ENCODE measurements at regions of chr12 and their contacts with region 1.

Region 1: DNA sequence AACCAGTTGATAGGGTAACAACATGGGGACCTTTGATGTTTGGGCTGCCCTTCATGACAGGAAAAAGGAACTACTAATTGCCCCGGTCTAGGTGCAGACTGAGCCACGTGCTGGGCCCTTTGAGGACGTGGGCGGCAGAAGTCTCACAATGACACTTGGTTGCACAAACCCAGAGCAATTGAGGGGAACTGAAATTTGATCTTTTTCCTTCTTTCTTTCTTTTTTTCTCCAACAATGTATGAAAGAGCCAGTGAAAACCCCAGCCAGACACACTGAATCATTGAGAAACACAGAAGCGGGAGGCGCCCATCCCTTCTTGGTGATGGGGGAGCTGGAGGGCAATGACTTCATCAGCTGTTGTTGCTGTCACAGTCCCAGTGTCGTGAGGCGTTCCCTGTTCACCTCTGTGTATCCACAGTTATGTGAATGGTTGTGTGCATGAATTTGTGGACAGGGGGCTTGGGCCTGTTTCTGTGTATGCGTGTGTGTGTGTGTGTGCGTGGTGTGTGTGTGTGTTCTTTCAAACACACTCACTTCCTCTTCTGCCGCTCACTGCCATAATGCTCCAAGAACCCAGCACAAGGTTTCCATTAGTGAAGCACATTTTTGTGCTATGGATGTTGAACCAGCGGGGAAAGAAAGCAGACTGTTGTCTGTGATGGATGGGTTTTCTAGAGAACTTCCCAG is 137.5 kb upstream of the CCND2 start:
- DNase-seq: no peak
- H3K4me3 Mint-ChIP-seq: peak overlapping the region; percentile 27
- H3K27ac Mint-ChIP-seq: peak overlapping the region; percentile 79
- H3K4me1 Mint-ChIP-seq: peaks cover 58% of the 10 kb centered on the region
- H3K27me3 Mint-ChIP-seq: no peaks in the 10 kb centered on the region

Region 2: DNA sequence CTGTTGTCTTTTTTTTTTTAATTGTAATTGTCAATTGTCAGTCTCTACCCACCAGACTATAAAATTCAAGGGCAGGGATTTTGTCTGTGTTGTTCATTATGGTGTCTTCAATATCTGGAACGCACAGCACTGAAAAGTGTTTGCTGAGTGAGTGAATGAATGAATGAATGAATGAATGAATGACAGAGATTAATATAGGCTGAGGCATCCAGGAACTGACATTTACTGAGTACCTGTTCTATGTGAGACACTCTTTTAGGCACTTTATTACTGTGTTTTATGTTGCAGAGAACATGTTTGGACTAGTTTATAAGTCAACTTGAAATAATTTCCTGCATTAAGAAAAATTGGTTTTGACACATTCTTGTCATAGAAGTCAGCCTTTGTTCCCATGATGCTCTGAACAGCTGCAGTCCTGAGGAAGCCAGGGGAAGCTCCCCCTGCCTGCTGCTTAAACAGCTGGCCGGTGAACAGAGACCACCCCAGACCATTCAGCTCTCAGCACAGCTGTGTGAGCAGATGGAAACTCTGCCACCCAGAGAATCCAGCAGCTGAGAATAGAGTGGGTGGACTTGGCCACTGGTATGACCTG is 23.2 kb before region 1 on chr12:
- intact Hi-C with region 1: loop called (anchors 1 kb)
- DNase-seq: no peak
- H3K4me3 Mint-ChIP-seq: no peak overlapping the region
- H3K27ac Mint-ChIP-seq: peak overlapping the region; percentile 50
- H3K4me1 Mint-ChIP-seq: peaks cover 83% of the 10 kb centered on the region
- H3K27me3 Mint-ChIP-seq: no peaks in the 10 kb centered on the region

Region 3: DNA sequence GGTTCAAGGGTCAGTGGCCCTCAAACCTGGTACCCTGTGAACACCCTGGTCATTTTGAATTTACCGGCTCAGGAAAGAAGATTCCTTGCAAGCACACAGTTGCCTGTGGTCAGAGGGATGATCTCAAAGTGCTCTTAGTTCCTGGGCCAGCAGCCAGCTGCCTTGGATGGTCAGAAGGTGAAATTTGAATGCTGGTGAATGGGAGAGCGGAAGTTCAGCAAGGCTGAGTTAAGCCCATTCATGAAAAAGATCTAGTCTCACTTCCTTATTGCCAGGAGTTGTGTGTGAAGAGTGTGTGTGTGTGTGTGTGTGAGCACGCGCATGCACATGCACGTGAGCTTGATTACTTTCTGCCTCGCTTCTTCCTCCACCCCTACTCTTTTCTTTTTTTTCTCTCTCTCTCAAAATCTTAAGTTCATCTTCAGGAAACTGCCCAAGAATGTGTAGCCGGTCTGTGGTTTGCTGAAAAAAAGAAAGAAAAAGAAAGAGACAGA is 18.0 kb before region 1 on chr12:
- intact Hi-C with region 1: loop called (anchors 1 kb)
- DNase-seq: no peak
- H3K4me3 Mint-ChIP-seq: peak overlapping the region; percentile 67
- H3K27ac Mint-ChIP-seq: peak overlapping the region; percentile 81
- H3K4me1 Mint-ChIP-seq: peaks cover 80% of the 10 kb centered on the region
- H3K27me3 Mint-ChIP-seq: no peaks in the 10 kb centered on the region

Region 4: GRCh38 chr12:4269279-4269991 is 133.4 kb after region 1 on chr12:
- intact Hi-C with region 1: loop called (anchors 1 kb)
- DNase-seq: peak; percentile 91
- H3K4me3 Mint-ChIP-seq: peak overlapping the region; percentile 90
- H3K27ac Mint-ChIP-seq: peak overlapping the region; percentile 94
- H3K4me1 Mint-ChIP-seq: peaks cover 26% of the 10 kb centered on the region
- H3K27me3 Mint-ChIP-seq: peaks cover 9% of the 10 kb centered on the region

Measured in activated T-helper 1 cell treated with anti-CD3 and anti-CD28 coated beads, Interleukin-12 subunit alpha, Interleukin-12 subunit beta, Interleukin-2, Interleukin-4 antibody, amounts not matched to agents 30 ng/mL and 10 ng/mL and 1 ng/mL, durations not matched to agents 14 hours and 24 hours and 36 hours (primary cell).